Activated naive CD4-positive, alpha-beta T cell treated with anti-CD3 and anti-CD28 coated beads for 36 hours (primary cell): ENCODE measurements at regions of chr9 and their contacts with region 1.

Region 1: GRCh38 chr9:98807070-98807810 is at the start of gene GALNT12:
- DNase-seq: peak; percentile 56
- H3K4me3 Mint-ChIP-seq: peak within 1 kb of the TSS; percentile 82
- H3K27ac Mint-ChIP-seq: no peak within 1 kb of the TSS
- H3K4me1 Mint-ChIP-seq: peaks cover 42% of the 10 kb centered on the region
- H3K27me3 Mint-ChIP-seq: no peaks in the 10 kb centered on the region
- total RNA-seq, gene GALNT12: 12.9 to 13.5 TPM

Region 2: GRCh38 chr9:98707166-98708102 is 99.8 kb before region 1 on chr9:
- CTCF ChIA-PET with region 1: no interaction called
- intact Hi-C with region 1: no loop called
- DNase-seq: peak; percentile 53
- H3K4me3 Mint-ChIP-seq: no peak overlapping the region
- H3K27ac Mint-ChIP-seq: no peak overlapping the region
- H3K4me1 Mint-ChIP-seq: peaks cover 3% of the 10 kb centered on the region
- H3K27me3 Mint-ChIP-seq: peaks cover 61% of the 10 kb centered on the region

Region 3: DNA sequence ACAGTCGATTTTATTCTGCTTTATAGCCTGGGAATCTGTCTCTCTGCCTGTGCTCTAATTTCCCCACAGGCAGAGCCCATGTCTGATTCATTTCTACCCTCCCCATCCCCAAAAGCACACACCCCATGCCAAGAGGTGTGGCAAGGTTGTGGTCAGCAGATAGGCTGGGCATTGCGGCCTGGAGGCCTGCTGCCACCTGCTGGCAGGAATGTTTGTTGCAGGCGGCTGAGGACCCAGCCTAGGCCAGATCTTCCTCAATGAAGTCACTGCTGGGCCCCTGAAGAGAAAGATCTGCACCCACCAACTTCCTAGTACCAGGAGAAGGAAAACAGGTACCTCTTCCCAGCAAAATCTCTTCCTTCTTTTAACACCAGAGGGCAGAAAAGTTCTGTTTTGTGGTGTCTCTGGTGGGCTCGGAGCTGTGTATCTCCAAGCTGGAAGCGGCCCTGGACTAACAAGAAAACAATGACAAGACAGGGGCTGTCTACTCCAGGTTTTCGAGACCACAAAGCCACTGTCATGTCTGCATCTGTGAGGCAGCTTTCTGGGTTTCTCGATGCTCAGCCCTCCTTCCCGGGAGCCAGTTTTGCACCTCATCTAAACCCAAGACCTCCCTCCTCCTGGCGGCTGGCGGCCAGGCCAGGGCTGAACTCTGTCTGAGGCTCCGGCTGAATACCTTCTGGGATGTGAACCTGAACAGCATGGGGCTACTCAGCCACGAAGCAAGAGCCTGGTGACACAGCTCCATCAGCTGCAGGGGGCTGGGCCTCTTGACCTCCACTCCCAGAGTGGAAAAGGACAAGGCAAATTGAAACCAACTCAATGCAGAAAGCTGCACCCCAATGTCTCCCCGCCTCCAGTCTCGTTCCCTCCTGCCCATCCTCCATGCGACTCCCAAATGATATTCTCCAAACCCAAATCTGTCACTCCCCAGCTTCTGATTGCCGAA is 15.8 kb before region 1 on chr9:
- CTCF ChIA-PET with region 1: interaction called, 31 read pairs
- intact Hi-C with region 1: loop called (anchors 1 kb)
- DNase-seq: peak; percentile 70
- H3K4me3 Mint-ChIP-seq: no peak overlapping the region
- H3K27ac Mint-ChIP-seq: no peak overlapping the region
- H3K4me1 Mint-ChIP-seq: peaks cover 30% of the 10 kb centered on the region
- H3K27me3 Mint-ChIP-seq: no peaks in the 10 kb centered on the region

Region 4: DNA sequence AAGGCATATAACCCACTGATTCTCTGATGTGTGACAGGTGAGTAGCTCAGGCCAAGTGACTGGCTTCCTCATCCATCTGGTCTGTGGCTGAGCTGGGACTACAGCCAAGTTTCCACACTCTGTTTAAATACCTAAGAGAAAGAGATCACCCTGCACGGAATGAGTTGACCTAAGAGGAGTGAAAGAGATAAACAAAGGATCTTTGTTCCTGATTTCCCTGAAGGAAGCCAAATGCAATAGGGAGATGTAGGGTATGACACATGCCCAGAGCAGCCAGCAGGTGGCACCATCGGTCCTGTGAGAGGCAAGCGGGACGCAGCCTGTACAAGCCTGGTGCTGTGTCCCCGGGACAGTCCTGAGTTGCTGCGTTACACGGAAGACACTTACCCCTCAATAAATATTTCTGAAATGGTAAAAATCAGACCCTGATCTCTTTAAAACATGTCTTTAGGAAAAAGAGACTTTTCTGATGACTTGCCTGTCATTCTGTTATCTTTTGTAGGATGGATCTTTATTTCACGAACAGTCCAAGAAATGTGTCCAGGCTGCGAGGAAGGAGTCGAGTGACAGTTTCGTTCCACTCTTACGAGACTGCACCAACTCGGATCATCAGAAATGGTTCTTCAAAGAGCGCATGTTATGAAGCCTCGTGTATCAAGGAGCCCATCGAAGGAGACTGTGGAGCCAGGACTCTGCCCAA is 41.4 kb after region 1 on chr9:
- CTCF ChIA-PET with region 1: interaction called, 6 read pairs
- intact Hi-C with region 1: loop called (anchors 2 kb)
- DNase-seq: peak; percentile 89
- H3K4me3 Mint-ChIP-seq: no peak overlapping the region
- H3K27ac Mint-ChIP-seq: no peak overlapping the region
- H3K4me1 Mint-ChIP-seq: peaks cover 11% of the 10 kb centered on the region
- H3K27me3 Mint-ChIP-seq: no peaks in the 10 kb centered on the region

Region 5: GRCh38 chr9:98998441-98999151 is 191.4 kb after region 1 on chr9:
- CTCF ChIA-PET with region 1: interaction called, 14 read pairs
- intact Hi-C with region 1: loop called (anchors 1 kb)
- DNase-seq: peak; percentile 69
- H3K4me3 Mint-ChIP-seq: no peak overlapping the region
- H3K27ac Mint-ChIP-seq: no peak overlapping the region
- H3K4me1 Mint-ChIP-seq: peaks cover 21% of the 10 kb centered on the region
- H3K27me3 Mint-ChIP-seq: peaks cover 4% of the 10 kb centered on the region

Region 6: DNA sequence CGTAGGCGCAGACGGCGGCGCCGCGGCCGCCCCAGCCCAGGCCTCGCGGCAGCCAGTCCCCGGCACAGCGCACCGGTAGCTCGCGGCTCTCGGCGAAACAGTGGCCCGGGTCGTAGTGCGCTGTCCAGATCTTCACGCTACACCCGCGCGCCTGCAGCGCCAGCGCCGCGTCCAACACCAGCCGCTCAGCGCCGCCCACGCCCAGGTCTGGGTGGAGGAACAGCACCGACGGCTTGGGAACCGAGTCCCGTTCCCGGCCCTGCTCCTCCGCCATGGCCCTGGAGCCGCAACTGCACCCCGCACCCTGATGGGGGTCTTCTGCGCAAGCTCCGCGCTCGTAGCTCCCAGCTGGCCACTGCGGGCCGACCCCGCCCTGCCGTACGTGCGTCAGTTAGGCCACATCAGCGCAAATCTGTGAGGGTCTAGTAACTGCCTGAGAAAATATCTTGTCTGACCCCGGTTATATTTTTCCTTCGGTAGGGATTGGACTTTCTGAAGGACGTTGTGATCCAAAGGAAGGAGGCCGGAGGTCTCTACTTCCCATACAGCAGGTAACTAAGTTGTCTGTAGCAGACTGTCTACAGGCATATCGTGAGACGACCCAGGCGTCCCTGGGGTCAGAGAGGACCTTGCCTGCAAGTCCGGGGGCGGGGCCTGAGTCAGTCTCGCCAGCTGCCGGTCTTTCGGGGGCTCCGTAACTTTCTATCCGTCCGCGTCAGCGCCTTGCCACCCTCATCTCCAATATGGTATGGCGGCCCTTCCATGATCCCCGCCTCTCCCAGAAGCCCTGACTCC is 414.6 kb after region 1 on chr9 and contains the starts of genes ALG2 and SEC61B:
- CTCF ChIA-PET with region 1: no interaction called
- intact Hi-C with region 1: loop called (anchors 5 kb)
- DNase-seq: peak; percentile 94
- H3K4me3 Mint-ChIP-seq: peak within 1 kb of the TSS; percentile 97
- H3K27ac Mint-ChIP-seq: peak within 1 kb of the TSS; percentile 98
- H3K4me1 Mint-ChIP-seq: peaks cover 56% of the 10 kb centered on the region
- H3K27me3 Mint-ChIP-seq: no peaks in the 10 kb centered on the region
- total RNA-seq, gene ALG2: 11.3 to 11.8 TPM
- total RNA-seq, gene SEC61B: 105 TPM